ENCODE measurements at regions of chr15 and their contacts with region 1.

Region 1: GRCh38 chr15:72599855-72600464 is 54.5 kb upstream of the GOLGA6B start:
- DNase-seq: peak; percentile 45
- CTCF ChIP-seq: peak; percentile 73

Region 2: GRCh38 chr15:72491768-72492167 is 108.2 kb before region 1 on chr15:
- CTCF ChIA-PET with region 1: no interaction called
- POLR2A ChIA-PET with region 1: no interaction called
- DNase-seq: no peak
- CTCF ChIP-seq: no peak

Region 3: DNA sequence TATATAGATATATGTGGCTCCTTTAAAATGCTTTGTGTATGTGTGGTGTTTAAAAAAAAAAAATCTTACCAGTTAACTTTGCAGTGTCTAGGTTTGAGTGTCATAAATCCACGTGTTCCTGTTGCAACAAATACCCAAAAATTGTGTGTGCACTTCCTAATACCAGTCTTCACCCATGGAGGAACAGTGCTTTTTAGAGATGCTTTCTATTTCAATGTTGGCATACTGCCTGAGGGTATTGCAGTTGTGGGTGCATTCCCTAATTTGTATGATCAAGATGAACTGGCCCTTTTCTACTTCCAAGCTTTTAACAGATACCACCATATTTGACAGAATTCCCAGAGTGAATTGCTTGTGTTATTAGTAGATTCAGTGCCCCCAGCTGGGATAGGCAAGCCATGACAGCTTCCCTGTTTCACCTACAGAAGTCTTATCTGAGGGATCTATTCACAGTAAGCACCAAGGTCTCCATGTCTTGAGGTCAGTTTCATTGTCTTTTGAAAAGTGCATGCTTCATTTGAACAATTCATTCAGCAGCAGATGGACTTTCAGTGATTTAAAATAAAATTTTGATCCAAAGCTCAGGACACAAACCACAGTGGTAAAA is 14.4 kb before region 1 on chr15:
- CTCF ChIA-PET with region 1: interaction called, 50 read pairs
- POLR2A ChIA-PET with region 1: no interaction called
- DNase-seq: no peak
- CTCF ChIP-seq: peak; percentile 22

Region 4: DNA sequence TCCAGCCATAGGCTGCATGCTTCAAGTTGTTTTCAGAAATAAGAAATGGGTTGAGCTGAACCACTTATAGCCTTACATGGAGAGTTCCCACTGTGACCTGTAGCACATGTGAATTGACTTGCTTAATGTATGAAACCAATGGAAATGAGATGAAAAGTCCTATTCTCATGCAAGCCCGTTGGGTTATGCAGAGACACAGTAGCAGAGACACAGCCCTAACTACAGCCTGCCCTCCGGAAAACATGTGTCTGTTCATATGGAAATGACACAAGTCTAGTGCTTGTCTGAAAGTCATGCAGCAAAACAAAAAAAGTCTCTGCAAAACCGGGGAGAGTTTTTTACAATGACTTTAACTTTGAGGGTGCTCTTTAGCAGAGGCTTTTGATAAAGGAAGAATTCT is 71.6 kb after region 1 on chr15:
- CTCF ChIA-PET with region 1: interaction called, 17 read pairs
- POLR2A ChIA-PET with region 1: no interaction called
- DNase-seq: no peak
- CTCF ChIP-seq: no peak

Region 5: DNA sequence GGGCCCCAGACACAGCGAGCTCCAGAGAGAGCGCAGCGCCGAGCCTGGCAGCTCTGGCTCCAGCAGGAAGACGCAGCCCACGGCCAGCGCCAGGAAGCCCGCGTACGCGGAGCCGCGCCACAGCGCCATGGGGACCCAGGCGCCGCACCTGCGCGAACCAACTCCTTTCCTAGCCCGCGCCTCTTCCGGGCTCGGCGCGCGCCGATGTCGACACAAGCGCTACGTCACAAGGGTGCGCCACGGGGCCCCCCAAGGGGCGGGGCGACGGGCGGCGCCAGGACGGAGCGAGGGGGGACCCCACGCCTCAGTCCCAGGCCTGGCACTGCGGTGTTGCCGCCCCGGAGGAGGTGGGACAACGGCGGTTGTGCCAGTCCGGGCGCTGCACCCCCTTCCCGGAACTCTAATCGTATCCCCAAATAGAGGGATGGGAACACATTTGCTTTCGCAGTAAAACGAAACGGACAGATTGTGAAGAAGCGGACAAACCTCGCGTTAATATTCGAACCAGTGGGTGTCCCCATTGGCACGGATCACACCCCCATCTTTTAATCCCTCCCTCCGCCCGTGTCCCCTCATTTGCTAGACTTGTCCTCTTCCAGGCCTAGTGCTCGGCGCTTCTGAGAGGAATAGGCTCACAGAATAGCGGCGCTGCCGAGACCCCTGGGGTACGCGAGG is 183.7 kb after region 1 on chr15 and contains the start of gene ADPGK:
- CTCF ChIA-PET with region 1: no interaction called
- POLR2A ChIA-PET with region 1: no interaction called
- DNase-seq: peak; percentile 97
- CTCF ChIP-seq: no peak

Measured in GM10248 (cell line).